GM13976 (cell line): ENCODE measurements at regions of chr2 and their contacts with region 1.

Region 1: GRCh38 chr2:117997872-117998454 is 15.9 kb downstream of the CCDC93 start:
- DNase-seq: no peak
- CTCF ChIP-seq: no peak

Region 2: GRCh38 chr2:117820444-117820843 is 177.5 kb before region 1 on chr2:
- in situ Hi-C with region 1: loop called (anchors 10 kb)
- DNase-seq: no peak
- CTCF ChIP-seq: no peak